Dorsolateral prefrontal cortex (tissue), 120 donors: ENCODE measurements at regions of chr5 and their contacts with region 1.

Region 1: GRCh38 chr5:37370864-37371726 is at the start of gene NUP155:
- DNase-seq: peak; percentile 87 to 96 (median 92)
- H3K4me3 ChIP-seq: peak within 1 kb of the TSS; percentile 52 to 100 (median 94)
- H3K27ac ChIP-seq: peak within 1 kb of the TSS in 56 of 59 donors; percentile 16 to 89 (median 80)
- H3K27me3 ChIP-seq: no peaks in the 10 kb centered on the region
- CTCF ChIP-seq: peak in 43 of 56 donors; percentile 8 to 59 (median 34)
- total RNA-seq, gene NUP155: 16.3 to 29.8 (median 23.4) TPM

Region 2: DNA sequence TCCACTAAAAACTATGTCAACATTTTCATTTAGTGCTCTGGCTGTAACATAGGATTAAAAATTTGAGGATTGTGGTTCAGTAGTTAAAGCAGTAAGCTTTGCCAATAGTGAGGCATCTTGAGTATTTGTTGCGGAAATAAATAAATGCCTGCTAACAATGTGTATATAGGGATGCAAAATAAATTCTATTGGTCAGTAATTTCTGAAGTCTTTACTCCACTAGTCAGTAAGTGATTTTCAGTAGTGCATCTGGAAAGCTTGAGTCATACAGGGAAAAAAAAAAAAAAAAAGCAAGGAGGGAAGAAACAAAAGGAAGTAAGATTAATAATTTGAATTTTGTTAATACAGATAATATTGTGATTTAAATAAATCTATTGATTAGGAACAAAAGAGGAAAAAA is 473.5 kb before region 1 on chr5:
- intact Hi-C with region 1: no loop called
- DNase-seq: no peak
- H3K4me3 ChIP-seq: no peak overlapping the region
- H3K27ac ChIP-seq: no peak overlapping the region
- H3K27me3 ChIP-seq: no peaks in the 10 kb centered on the region
- CTCF ChIP-seq: no peak

Region 3: GRCh38 chr5:37248970-37249686 is 122.0 kb before region 1 on chr5 and contains the start of gene CPLANE1:
- intact Hi-C with region 1: loop called (anchors 5 kb)
- DNase-seq: peak; percentile 46 to 89 (median 65)
- H3K4me3 ChIP-seq: peak within 1 kb of the TSS; percentile 65 to 97 (median 88)
- H3K27ac ChIP-seq: peak within 1 kb of the TSS; percentile 26 to 96 (median 85)
- H3K27me3 ChIP-seq: no peaks in the 10 kb centered on the region
- CTCF ChIP-seq: peak in 22 of 56 donors; percentile 4 to 48 (median 15)
- total RNA-seq, gene CPLANE1: 39.2 to 80.3 (median 55.4) TPM